Mammary epithelial cell (primary cell): ENCODE measurements at regions of chrX and their contacts with region 1.

Region 1: DNA sequence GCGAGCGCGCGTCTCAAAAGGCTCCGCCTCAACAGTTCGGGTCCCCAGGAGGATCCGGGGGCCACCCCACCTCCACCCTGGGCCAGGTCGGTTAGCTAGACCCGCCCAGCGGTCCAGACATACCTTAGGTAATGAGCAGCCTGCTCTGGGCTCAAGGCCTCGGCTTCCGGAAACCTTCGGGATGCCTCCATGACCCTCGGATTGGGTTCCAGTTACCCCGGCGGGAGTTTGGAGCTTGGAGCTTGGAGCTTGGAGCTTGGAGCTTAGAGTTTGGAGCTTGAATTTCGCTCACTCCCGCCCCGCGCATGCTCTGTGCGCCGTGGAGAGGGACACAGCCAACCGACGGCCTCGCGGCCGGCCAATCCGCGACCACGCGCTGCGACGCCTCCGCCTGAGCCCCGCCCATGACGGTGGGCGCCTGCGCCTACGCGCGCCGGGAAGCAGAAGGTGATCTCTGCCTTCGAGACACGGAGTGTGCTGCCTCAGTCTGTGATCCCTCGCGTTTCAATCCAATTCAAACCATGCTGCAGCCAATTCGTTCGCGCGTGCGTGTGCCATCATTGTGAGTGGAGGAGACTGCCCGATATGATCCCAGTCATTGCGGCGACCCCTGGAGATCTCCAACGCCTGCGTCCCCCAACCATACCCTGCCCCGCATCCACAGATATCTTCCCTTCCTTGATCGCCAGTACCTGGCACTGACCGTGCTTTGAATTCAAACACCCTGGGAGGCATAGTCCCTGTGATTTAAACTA is at the start of gene ERCC6L:
- DNase-seq: peak; percentile 84
- H3K4me3 ChIP-seq: peak within 1 kb of the TSS; percentile 42 to 58 (median 52)
- H3K27ac ChIP-seq: peak within 1 kb of the TSS; percentile 52
- H3K4me1 ChIP-seq: no peaks in the 10 kb centered on the region
- H3K27me3 ChIP-seq: no peaks in the 10 kb centered on the region
- CTCF ChIP-seq: no peak
- total RNA-seq, gene ERCC6L: 0.17 to 7.0 TPM

Region 2: GRCh38 chrX:72540318-72540717 is 301.4 kb after region 1 on chrX:
- CTCF ChIA-PET with region 1: no interaction called
- dilution Hi-C with region 1: no loop called
- in situ Hi-C with region 1: loop called (anchors 10 to 25 kb)
- intact Hi-C with region 1: no loop called
- DNase-seq: no peak
- H3K4me3 ChIP-seq: no peak overlapping the region
- H3K27ac ChIP-seq: no peak overlapping the region
- H3K4me1 ChIP-seq: no peaks in the 10 kb centered on the region
- H3K27me3 ChIP-seq: peaks cover 1% of the 10 kb centered on the region
- CTCF ChIP-seq: peak; percentile 21 to 35